ENCODE measurements at regions of chr9 and their contacts with region 1.

Region 1: DNA sequence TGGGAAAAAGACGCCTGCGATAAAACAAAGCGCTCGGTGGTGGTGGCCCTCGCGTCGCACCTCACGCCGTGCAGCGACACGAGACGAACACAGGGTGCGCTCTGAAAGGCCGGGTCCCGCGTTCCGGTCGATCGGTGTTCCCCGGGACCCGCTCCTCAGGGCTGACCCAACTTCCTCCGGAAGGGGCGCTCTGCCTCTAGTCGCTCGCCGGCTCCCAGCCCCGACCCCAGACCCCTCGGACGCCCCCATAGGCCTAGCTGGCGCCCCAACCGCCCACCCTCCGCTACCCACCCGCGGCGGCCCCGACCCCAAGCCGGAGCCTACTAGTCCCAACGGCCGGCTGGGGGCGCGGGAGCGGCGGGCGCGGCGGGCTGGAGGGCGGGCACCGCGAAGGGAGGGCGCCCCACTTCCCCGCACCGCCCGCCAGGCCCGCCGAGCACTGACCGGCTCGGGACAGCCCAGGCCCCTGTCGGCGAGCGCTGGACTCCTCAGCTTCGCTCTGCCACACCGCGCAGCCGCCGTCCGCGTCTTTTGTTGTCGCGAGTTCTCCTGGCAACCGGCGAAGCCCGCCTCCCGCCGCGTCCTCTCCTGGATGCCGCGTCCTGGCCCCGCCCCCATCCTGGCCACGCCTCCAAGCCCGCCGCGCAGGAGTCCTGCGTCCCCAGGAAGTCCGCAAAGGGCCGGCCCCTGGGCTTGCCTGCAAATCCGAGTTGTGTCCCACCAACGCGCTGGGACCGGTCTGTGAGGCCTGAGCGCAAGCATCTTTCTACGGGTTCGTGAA is at the start of gene KIF27:
- DNase-seq: peak; percentile 99
- ATAC-seq: peak; percentile 85
- H3K4me3 Mint-ChIP-seq: peak within 1 kb of the TSS; percentile 91
- H3K27ac Mint-ChIP-seq: peak within 1 kb of the TSS; percentile 94
- H3K4me1 Mint-ChIP-seq: peaks cover 19% of the 10 kb centered on the region
- H3K27me3 Mint-ChIP-seq: no peaks in the 10 kb centered on the region
- CTCF ChIP-seq: no peak
- total RNA-seq, gene KIF27: 4.9 and 5.1 TPM in 2 replicates

Region 2: DNA sequence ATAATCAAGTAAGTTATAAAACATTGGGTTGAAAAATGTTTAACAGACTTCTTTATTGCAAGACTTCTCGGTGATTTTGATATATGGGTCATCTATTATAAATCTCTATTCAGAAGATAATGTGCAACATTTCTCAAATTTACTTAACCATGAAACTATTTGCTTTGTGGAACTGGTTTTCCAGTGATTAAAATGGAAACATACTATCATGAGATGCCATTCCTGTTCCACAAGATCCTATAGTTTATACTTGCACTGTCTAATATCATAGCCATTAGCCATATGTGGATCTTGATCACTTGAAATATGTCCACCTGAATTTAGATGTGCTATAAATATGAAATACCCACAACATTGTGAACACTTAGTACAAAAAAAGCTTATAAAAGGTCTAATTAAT is 827.2 kb before region 1 on chr9:
- CTCF ChIA-PET with region 1: no interaction called
- POLR2A ChIA-PET with region 1: no interaction called
- intact Hi-C with region 1: no loop called
- DNase-seq: no peak
- ATAC-seq: no peak
- H3K4me3 Mint-ChIP-seq: no peak overlapping the region
- H3K27ac Mint-ChIP-seq: no peak overlapping the region
- H3K4me1 Mint-ChIP-seq: no peaks in the 10 kb centered on the region
- H3K27me3 Mint-ChIP-seq: no peaks in the 10 kb centered on the region
- CTCF ChIP-seq: no peak

Region 3: GRCh38 chr9:83956434-83957247 is 35.5 kb after region 1 on chr9:
- CTCF ChIA-PET with region 1: no interaction called
- POLR2A ChIA-PET with region 1: interaction called, 8 read pairs
- intact Hi-C with region 1: loop called (anchors 1 kb)
- DNase-seq: peak; percentile 62
- ATAC-seq: peak; percentile 84
- H3K4me3 Mint-ChIP-seq: peak overlapping the region; percentile 97
- H3K27ac Mint-ChIP-seq: peak overlapping the region; percentile 94
- H3K4me1 Mint-ChIP-seq: peaks cover 19% of the 10 kb centered on the region
- H3K27me3 Mint-ChIP-seq: no peaks in the 10 kb centered on the region
- CTCF ChIP-seq: no peak

Region 4: DNA sequence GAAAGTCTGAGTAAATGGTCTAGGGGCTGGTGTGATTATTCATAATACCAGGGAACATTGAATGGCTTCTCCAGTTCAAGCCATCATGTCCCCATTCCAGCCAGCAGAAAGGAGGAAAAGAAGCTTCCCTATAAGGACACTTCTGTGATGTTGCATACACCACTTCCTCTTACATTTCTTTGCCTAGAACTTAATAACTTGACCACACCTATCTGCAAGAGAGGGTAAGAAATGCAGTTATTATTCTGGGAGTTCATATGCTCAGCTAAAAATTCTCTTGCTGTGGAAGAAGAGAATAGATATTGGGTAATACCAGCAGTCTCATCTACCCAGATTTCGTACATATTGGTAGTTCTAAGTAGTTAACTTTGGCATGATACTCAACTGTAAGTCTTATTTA is 253.4 kb after region 1 on chr9:
- CTCF ChIA-PET with region 1: interaction called, 4 read pairs
- POLR2A ChIA-PET with region 1: no interaction called
- intact Hi-C with region 1: loop called (anchors 1 kb)
- DNase-seq: no peak
- ATAC-seq: no peak
- H3K4me3 Mint-ChIP-seq: no peak overlapping the region
- H3K27ac Mint-ChIP-seq: no peak overlapping the region
- H3K4me1 Mint-ChIP-seq: no peaks in the 10 kb centered on the region
- H3K27me3 Mint-ChIP-seq: peaks cover 4% of the 10 kb centered on the region
- CTCF ChIP-seq: no peak

Measured in activated B cell treated with CpG ODN at 0.5 μM for 24 hours (primary cell).